BJ (cell line): ENCODE measurements at regions of chr11 and their contacts with region 1.

Region 1: DNA sequence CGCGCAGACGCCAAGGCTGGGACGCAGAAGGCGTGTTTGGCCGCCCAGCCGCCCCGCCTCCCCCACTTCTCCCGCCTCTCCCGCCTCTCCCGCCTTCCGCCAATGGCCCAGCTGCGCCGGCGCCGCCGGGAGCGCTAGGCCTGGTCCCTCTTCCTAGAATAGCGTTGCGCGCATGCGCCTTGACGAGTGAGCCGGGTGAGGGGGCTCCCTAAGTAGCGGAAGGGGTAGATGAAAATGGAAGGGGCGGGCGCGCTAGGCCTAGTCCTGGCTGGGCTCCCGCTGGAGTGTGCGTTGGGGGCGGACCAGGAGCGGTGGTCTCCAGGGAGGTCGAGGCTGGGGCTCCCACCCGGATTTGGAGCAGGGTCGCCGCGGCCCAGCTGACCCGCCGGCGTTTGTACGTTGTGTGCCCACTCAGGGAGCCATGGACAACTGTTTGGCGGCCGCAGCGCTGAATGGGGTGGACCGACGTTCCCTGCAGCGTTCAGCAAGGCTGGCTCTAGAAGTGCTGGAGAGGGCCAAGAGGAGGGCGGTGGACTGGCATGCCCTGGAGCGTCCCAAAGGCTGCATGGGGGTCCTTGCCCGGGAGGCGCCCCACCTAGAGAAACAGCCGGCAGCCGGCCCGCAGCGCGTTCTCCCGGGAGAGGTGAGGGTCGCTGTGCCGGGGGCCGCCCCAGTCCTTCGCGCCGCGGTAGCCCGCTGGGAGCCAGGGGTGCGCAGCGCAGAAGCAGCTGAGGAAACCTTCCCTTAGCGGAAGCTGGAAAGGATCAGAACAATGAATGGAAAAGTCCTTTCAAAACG is at the start of gene AKIP1:
- DNase-seq: peak; percentile 54
- H3K4me3 ChIP-seq: peak within 1 kb of the TSS; percentile 71
- H3K27me3 ChIP-seq: no peaks in the 10 kb centered on the region
- CTCF ChIP-seq: 0 out of 2 replicates have a peak, but pooled peaks have one; percentile 3
- polyA plus RNA-seq, gene AKIP1: 39.4 and 50.6 TPM in 2 replicates

Region 2: GRCh38 chr11:8813658-8814057 is 97.6 kb before region 1 on chr11:
- CTCF ChIA-PET with region 1: interaction called, 4 read pairs
- POLR2A ChIA-PET with region 1: interaction called, 11 read pairs
- DNase-seq: no peak
- H3K4me3 ChIP-seq: no peak overlapping the region
- H3K27me3 ChIP-seq: no peaks in the 10 kb centered on the region
- CTCF ChIP-seq: peak; percentile 92

Region 3: DNA sequence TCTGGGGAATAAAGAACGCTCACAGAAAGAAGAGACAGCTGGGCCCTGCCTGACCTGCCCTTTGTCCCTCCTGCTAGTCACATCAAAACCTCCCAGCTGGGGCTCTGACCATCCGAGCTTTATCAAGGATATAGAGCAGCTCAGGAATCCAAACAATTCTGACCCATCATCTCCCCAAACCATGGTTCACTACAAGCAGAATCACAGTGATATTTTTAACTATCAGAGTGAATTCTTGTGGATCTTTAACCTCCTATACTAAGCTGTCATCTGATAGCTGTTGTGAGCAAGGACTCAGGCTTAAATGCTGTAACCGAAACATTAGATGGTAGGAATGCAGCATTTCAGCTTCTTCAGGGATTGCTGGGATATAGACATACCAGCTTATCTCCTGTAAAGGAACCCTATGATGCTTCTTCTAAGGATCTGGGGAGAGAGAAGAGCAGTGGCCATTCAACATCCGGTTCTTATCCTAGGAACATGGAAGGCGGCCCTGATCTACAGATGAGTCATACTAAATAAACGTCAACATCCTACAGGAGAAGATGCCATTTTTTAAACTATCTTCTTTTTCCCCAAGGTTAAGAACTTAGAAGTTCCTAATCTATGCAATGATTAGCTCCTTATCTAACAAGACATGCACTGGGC is 85.0 kb before region 1 on chr11:
- CTCF ChIA-PET with region 1: interaction called, 3 read pairs
- POLR2A ChIA-PET with region 1: interaction called, 10 read pairs
- DNase-seq: no peak
- H3K4me3 ChIP-seq: no peak overlapping the region
- H3K27me3 ChIP-seq: no peaks in the 10 kb centered on the region
- CTCF ChIP-seq: no peak

Region 4: GRCh38 chr11:8941341-8942103 is 30.3 kb after region 1 on chr11:
- CTCF ChIA-PET with region 1: interaction called, 4 read pairs
- POLR2A ChIA-PET with region 1: interaction called, 14 read pairs
- DNase-seq: no peak
- H3K4me3 ChIP-seq: no peak overlapping the region
- H3K27me3 ChIP-seq: no peaks in the 10 kb centered on the region
- CTCF ChIP-seq: no peak

Region 5: GRCh38 chr11:8948886-8949285 is 37.7 kb after region 1 on chr11:
- CTCF ChIA-PET with region 1: interaction called, 5 read pairs
- POLR2A ChIA-PET with region 1: interaction called, 13 read pairs
- DNase-seq: no peak
- H3K4me3 ChIP-seq: no peak overlapping the region
- H3K27me3 ChIP-seq: no peaks in the 10 kb centered on the region
- CTCF ChIP-seq: no peak

Region 6: GRCh38 chr11:8959546-8960166 is 48.4 kb after region 1 on chr11:
- CTCF ChIA-PET with region 1: interaction called, 49 read pairs
- POLR2A ChIA-PET with region 1: no interaction called
- DNase-seq: peak; percentile 22
- H3K4me3 ChIP-seq: no peak overlapping the region
- H3K27me3 ChIP-seq: no peaks in the 10 kb centered on the region
- CTCF ChIP-seq: peak; percentile 66